Psoas muscle (tissue), 8 donors: ENCODE measurements at regions of chr22 and their contacts with region 1.

Region 1: DNA sequence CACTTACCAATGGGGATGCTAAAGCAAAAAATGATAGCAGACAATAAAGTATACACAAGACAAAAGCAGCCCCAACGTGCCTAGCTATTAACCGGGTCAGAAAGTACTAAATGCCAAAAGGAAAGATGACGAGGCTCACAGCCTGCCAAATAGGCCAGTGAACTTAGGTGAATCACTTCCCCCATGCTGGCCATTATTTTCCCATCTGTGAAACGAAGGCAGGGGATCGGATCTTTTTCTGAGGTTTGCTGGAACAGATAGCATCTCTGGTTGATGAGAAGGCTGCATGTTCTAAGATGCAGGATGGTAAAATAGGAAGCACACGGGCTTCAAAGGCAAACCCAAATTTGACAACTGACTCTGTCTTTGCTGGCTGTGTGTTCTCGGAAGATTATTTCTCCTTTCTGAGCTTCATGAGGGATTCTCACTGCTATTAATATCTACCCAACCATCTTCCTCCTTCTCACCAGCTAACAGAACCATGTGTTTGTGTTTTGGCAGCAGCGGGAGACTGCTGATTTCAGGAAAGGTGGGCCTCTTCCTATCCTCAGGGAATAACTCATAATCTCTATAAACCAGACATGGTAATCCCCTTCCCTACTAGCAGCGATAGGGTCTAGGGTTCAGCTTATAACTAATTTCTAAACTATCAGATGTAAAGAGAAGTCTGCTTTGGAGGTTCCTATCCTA is 390.7 kb downstream of the LARGE1 start:
- DNase-seq: peak in 1 of 2 donors; percentile 36
- ATAC-seq: peak in 3 of 4 donors; percentile 77 to 83 (median 81)
- H3K4me3 ChIP-seq: no peak overlapping the region
- H3K27ac ChIP-seq: no peak overlapping the region
- H3K4me1 ChIP-seq: peaks cover 15% of the 10 kb centered on the region
- H3K27me3 ChIP-seq: no peaks in the 10 kb centered on the region
- CTCF ChIP-seq: no peak

Region 2: DNA sequence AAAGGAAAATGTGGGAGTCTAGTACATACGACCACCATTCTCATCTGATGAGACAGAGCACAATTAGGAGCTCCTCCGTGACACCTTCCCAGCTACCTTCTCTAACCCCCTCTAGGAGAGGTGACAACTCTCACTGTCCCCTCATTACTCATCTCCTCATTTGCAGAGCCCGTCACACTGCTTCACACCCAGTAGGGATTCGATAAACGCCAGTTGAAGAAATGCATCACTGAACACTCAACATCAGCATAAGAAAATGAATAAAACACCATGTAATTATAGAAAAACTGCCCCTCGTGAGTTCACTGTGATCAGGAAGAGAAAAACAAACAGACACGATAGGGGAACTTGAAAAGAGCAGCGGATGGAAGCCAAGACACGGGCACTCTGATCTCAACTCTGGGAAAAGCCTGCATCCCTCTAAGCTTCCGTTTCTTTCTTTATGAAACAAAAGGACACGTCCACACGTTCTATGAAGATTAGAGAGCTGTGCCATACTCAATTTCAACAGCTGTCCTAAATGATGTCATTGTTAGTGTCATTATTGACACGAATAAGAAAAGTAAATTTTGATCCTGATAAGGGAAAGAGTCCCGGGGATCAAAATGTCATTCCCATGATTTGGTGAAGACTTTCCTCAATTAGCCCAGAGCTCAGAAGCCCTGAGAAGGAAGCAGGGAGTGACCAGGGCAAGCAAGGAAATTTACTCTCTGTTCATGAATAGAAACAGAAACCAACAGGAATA is 33.8 kb after region 1 on chr22:
- intact Hi-C with region 1: loop called in 1 of 2 experiments (anchors 5 kb)
- DNase-seq: no peak
- ATAC-seq: no peak
- H3K4me3 ChIP-seq: no peak overlapping the region
- H3K27ac ChIP-seq: no peak overlapping the region
- H3K4me1 ChIP-seq: no peaks in the 10 kb centered on the region
- H3K27me3 ChIP-seq: no peaks in the 10 kb centered on the region
- CTCF ChIP-seq: no peak